ENCODE measurements at regions of chr15 and their contacts with region 1.

Region 1: DNA sequence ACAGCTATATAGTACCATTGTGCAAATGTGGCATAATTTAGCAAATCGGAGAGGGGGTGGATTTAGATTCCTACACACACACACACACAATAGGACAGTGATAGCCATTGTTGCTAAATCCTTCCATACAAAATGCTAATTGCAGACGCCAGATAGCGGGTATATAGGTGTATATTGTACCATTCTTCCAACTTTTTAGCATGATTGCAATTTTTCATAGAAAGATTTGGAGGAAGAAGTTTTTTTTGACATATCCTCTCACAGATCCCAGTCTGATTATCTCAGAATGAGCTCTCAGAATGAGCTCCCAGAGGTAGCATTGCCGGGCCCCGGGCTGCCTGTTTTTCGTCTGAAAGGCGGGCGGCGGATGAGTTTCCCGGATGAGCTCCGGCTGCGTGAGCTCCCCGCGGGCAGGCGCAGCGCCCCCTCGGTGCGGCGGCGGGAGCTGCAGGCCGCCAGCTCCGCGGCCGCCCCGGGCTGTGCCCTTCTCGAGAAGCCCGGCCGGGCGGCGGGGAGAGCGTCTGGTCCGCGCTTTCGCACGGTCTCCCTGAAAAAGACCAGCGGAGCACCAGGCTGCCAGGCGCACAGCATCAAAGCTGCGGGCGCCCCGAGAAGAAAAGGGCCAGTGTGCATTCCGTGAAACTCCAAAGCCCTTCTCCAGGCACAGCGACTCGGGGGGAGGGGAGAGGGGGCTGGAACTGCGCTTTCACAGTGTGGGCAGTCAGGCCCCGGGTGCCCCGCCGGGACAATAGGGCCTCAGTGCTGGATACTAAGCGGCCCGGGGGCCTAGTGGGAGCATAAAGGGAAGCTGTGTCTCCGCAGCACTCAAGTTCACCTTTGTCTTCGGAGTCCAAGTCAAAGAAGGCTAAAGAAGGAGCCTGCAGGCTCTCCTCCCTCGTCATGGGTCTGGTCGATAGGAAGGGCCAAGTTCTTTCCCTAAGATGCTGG is 12.0 kb upstream of the SHC4 start:
- DNase-seq: no peak
- H3K4me3 ChIP-seq: peak overlapping the region; percentile 57
- H3K27ac ChIP-seq: peak overlapping the region; percentile 21
- H3K27me3 ChIP-seq: no peaks in the 10 kb centered on the region
- CTCF ChIP-seq: peak; percentile 66

Region 2: GRCh38 chr15:48861813-48862431 is 113.8 kb before region 1 on chr15:
- CTCF ChIA-PET with region 1: interaction called, 102 read pairs
- POLR2A ChIA-PET with region 1: no interaction called
- DNase-seq: no peak
- H3K4me3 ChIP-seq: no peak overlapping the region
- H3K27ac ChIP-seq: no peak overlapping the region
- H3K27me3 ChIP-seq: no peaks in the 10 kb centered on the region
- CTCF ChIP-seq: peak; percentile 88

Region 3: GRCh38 chr15:48877630-48878595 is 97.8 kb before region 1 on chr15 and contains the start of gene EID1:
- CTCF ChIA-PET with region 1: interaction called, 23 read pairs
- POLR2A ChIA-PET with region 1: no interaction called
- DNase-seq: peak; percentile 90
- H3K4me3 ChIP-seq: peak within 1 kb of the TSS; percentile 87
- H3K27ac ChIP-seq: peak within 1 kb of the TSS; percentile 75
- H3K27me3 ChIP-seq: no peaks in the 10 kb centered on the region
- CTCF ChIP-seq: no peak
- polyA plus RNA-seq, gene EID1: 292 and 348 TPM in 2 replicates

Region 4: GRCh38 chr15:48963524-48964113 is 12.1 kb before region 1 on chr15 and contains the start of gene SHC4:
- CTCF ChIA-PET with region 1: interaction called, 94 read pairs
- POLR2A ChIA-PET with region 1: interaction called, 6 read pairs
- DNase-seq: no peak
- H3K4me3 ChIP-seq: peak within 1 kb of the TSS; percentile 75
- H3K27ac ChIP-seq: peak within 1 kb of the TSS; percentile 62
- H3K27me3 ChIP-seq: no peaks in the 10 kb centered on the region
- CTCF ChIP-seq: peak; percentile 46
- polyA plus RNA-seq, gene SHC4: 5.1 TPM in 2 replicates

Region 5: DNA sequence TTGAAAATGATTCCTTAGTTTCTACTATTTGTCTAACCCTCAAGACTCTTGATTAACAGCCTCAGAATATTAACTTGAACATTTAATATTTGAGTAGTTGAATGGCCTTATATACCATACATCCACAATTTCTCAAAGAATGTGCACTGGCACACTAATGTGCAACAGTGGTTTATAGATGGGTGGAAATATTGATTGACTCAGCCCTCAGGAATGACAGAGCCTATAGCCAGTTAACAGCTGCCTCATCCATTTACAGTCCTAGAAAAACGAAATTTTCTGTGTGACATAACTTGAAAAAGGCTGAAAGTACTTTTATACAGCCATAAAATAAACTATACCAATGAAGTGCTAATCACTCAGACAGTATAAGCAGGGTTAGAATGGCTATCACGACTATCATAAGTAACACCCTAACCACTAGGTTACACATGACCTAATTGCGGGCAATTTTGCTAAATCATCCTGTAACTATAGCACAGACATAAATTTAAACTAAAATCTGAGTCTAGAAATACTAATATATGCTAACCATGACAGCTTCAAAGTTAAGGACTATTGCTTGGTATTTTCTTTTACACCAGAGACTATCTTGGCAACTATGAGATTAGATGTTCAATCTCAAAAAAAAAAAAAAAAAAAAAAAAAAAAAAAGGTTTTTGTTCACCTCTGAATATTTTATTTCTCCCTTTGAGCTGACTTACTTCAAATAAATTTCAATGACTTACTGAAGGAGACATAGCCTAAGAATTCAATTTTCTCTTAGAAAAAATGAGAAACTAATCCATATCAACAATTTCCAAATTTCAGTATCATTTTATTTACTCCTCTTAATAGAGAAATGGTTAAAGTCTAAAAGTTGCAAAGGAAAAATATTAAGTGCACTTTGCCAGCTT is 61.2 kb after region 1 on chr15:
- CTCF ChIA-PET with region 1: interaction called, 23 read pairs
- POLR2A ChIA-PET with region 1: no interaction called
- DNase-seq: peak; percentile 18
- H3K4me3 ChIP-seq: no peak overlapping the region
- H3K27ac ChIP-seq: no peak overlapping the region
- H3K27me3 ChIP-seq: no peaks in the 10 kb centered on the region
- CTCF ChIP-seq: no peak

Region 6: DNA sequence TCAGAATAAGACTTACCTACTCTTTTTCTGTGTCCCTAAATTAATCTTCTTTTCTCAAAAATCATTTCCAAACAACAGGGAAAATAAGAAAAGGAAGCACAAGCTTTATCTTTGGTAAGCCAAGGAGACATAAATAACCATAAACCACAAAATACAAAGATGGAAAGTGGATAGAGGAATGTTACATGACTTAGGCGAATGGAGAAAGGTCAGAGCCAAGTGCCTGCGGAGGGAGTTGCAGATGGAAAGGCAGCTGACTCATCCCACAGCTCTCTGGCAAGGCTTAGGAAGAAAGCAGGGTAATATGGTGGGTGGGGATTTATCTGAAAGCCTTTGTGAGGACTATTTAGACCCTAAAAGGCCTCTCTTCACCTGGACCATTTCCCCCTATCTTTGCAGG is 267.1 kb after region 1 on chr15:
- CTCF ChIA-PET with region 1: no interaction called
- POLR2A ChIA-PET with region 1: no interaction called
- DNase-seq: peak; percentile 71
- H3K4me3 ChIP-seq: no peak overlapping the region
- H3K27ac ChIP-seq: peak overlapping the region; percentile 72
- H3K27me3 ChIP-seq: no peaks in the 10 kb centered on the region
- CTCF ChIP-seq: no peak

Measured in AG04450 (cell line).